OCI-LY7 (cell line): ENCODE measurements at regions of chr6 and their contacts with region 1.

Region 1: DNA sequence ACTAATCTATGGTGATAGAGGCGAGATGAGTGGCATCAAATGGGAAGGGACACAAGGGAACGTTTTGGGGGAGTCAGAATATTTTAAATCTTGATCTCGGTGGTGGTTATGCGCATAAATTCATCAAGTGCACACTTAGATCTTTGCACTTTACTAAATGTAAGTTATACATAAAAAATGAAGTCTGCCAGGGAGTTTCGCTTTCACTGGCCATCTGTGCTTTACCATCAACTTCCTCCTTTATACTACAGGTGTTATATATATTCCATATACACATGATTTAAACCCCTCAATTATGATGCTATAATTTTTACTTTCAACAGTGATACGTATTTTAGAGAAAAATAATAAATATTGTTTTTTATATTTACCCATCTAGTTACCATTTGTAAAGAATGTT is 97.6 kb upstream of the AKIRIN2 start:
- DNase-seq: peak; percentile 80
- H3K4me3 ChIP-seq: peak overlapping the region; percentile 66
- H3K27ac ChIP-seq: peak overlapping the region; percentile 91
- H3K4me1 ChIP-seq: peaks cover 94% of the 10 kb centered on the region
- CTCF ChIP-seq: no peak

Region 2: DNA sequence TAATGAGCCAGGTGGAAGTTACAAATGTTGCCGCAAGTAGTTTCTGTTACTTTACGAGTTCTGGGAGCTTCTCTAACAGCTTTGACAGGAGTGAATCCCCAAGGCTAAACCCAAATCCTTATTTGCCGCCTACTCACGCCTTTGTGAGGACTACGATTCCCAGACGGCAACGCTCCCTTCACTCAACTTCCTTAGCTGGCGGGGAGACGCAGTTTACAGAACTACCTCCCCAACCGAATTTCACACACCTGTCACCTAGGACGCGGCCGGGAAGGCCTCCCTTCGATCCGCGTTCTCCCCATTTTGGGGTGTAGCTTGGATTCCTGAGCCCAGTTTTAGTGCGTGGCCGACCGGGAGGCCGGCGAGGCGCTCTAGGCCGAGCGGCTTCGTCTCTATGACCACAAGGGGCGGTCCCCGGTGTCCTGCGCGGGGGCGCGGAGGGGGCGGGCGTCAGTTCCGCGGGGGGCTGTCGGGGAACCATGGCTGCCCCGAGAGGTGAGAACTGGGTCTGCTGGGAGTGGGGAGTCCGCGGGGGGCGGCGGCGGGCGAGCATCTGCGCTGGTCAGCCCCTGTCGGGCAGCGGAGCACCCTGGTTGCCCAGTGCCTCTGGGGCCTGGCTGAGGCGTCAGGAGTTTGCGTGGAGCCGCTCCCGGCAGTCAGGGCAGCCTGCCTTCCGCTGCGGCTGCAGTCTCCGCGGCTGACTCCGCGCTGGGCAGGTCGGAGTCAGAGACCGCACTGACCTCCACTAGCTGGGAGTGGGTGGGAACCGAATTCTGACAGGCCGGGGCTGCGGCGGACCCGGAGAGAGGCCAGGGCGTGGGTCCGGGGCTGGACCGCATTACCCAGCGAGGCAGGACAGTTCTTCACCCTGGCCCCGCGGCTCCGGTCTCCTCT is 326.9 kb before region 1 on chr6 and contains the start of gene SLC35A1:
- CTCF ChIA-PET with region 1: no interaction called
- POLR2A ChIA-PET with region 1: interaction called, 8 read pairs
- intact Hi-C with region 1: loop called (anchors 5 kb)
- DNase-seq: peak; percentile 86
- H3K4me3 ChIP-seq: peak within 1 kb of the TSS; percentile 74
- H3K27ac ChIP-seq: peak within 1 kb of the TSS; percentile 35
- H3K4me1 ChIP-seq: peaks cover 25% of the 10 kb centered on the region
- CTCF ChIP-seq: 0 out of 2 replicates have a peak, but pooled peaks have one; percentile 27
- total RNA-seq, gene SLC35A1: 17.0 and 17.2 TPM in 2 replicates

Region 3: DNA sequence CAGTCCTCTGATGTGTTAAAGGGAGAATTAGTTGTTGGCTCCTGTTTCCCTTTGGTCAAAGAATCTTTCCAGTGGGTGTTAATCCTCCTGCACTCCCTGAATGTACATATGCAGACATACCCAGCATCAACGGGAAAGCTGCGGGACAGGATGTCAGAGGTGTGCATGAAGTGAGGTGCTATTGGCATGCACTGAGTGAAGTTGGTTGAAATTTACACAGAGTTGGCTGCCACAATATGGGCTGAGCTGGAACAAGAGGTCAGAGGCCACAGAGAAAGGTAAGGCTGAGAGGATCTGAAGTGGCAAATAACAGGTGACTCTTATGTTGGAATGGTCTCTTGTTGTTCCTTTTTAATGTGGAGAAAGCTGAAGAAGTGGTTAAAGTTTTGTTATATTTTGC is 15.0 kb before region 1 on chr6:
- CTCF ChIA-PET with region 1: no interaction called
- POLR2A ChIA-PET with region 1: interaction called, 11 read pairs
- intact Hi-C with region 1: no loop called
- DNase-seq: no peak
- H3K4me3 ChIP-seq: no peak overlapping the region
- H3K27ac ChIP-seq: no peak overlapping the region
- H3K4me1 ChIP-seq: peaks cover 5% of the 10 kb centered on the region
- CTCF ChIP-seq: no peak

Region 4: DNA sequence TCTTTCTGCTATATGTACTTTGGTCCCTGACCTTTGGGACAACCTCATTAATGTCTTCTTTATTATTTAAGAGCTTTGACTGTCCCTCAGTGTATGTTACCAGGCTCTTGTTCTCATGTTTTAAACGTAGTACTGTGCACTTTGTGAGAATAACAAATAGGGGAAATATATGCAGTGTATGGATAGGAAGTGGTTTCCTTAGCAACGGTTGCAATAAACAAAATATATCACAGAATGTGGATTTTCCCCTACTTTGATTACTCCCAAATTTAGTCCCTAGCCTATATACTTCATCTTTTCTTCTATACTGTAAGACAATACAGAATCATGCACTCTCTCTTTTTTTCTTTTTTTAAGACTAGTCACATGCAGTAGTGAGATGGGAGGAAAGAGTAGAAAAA is 26.2 kb after region 1 on chr6:
- CTCF ChIA-PET with region 1: interaction called, 3 read pairs
- POLR2A ChIA-PET with region 1: interaction called, 43 read pairs
- intact Hi-C with region 1: loop called (anchors 1 kb)
- DNase-seq: no peak
- H3K4me3 ChIP-seq: no peak overlapping the region
- H3K27ac ChIP-seq: no peak overlapping the region
- H3K4me1 ChIP-seq: peaks cover 56% of the 10 kb centered on the region
- CTCF ChIP-seq: no peak

Region 5: GRCh38 chr6:87907521-87907920 is 107.9 kb after region 1 on chr6:
- CTCF ChIA-PET with region 1: no interaction called
- POLR2A ChIA-PET with region 1: interaction called, 27 read pairs
- intact Hi-C with region 1: loop called (anchors 5 kb)
- DNase-seq: peak; percentile 72
- H3K4me3 ChIP-seq: no peak overlapping the region
- H3K27ac ChIP-seq: peak overlapping the region; percentile 99
- H3K4me1 ChIP-seq: peaks cover 98% of the 10 kb centered on the region
- CTCF ChIP-seq: no peak

Region 6: GRCh38 chr6:87922947-87923330 is 123.3 kb after region 1 on chr6:
- CTCF ChIA-PET with region 1: no interaction called
- POLR2A ChIA-PET with region 1: interaction called, 11 read pairs
- intact Hi-C with region 1: loop called (anchors 1 kb)
- DNase-seq: peak; percentile 98
- H3K4me3 ChIP-seq: peak overlapping the region; percentile 31
- H3K27ac ChIP-seq: peak overlapping the region; percentile 99
- H3K4me1 ChIP-seq: peaks cover 99% of the 10 kb centered on the region
- CTCF ChIP-seq: no peak